HEK293 (cell line): ENCODE measurements at regions of chr10 and their contacts with region 1.

Region 1: DNA sequence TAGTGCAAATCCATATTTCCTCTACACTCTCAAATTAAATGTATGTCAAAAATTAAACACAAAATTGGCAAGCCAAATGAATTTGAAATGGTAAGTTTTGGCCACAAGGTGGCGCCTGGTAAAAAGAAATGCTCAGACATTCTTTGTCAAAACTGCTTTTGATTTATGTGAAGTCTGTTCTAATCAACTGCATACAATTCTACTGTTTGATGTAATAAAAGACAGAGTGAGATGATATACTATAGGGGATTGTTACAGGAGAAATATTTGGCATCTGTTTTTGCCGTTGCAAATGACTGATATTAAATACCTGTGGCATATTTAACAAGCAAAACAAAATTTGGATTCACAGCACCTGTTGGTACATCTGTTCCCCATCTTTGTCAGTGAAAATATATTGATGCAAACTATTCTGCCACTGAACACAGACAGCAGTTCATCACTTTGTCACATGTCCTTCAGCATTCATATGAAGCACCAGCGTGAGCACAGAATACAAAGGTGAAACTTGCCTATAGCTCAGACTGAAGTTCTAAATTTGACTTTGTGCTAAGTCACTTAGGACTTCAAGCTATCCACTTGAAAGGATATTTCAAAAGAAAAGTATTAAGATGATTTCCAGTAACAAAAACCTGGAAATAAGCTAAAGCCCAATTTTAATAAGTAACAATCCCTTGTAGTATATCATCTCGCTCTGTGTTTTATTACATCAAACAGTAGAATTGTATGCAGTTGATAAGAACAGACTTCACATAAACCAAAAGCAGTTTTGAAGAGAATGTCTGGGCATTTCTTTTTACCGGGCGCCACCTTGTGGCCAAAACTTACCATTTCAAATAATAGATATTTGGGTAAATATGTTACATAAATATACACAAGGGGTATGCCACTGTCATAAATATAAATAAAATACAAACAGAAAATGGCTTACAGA is 10.2 kb upstream of the CH25H start:
- H3K4me3 ChIP-seq: no peak overlapping the region
- H3K27ac ChIP-seq: no peak overlapping the region
- H3K4me1 ChIP-seq: 0 out of 2 replicates have a peak, but pooled peaks cover 2% of the 10 kb centered on the region
- CTCF ChIP-seq: peak; percentile 44; the same call in 1 of the 2 replicates

Region 2: DNA sequence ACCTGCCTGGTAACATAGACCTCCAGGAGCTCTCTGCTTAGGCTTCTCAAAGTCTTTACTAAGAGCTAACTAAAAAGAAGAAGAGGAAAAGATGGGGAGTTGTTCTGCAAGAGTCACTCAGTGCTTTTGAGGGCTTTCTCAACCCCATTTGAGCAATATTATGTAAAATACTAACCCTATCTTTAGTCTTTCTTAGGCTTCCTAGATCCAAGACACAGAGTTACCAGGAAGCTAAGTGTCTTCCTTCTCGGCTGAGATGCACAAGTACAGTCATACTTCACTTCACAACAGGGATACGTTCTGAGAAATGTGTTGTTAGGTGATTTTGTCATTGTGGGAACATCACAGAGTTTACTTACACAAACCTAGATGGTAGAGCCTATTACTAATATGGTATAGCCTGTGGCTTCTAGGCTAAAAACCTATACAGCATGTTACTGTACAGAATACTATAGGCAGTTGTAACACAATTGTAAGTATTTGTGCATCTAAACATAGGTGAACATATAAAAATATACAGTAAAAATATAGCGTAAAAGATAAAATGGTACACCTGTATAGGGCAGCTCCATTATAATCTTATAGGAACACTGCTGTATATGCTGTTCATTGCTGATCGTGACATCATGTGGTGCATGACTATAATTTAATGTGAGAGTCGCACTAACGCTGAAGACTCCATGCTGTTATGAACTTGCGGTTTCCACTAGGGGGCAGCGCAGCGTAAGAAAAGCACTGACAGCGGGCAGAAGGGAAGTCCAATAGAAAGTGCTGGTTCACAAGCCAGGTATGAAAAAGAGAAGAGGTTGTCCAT is 382.0 kb before region 1 on chr10:
- CTCF ChIA-PET with region 1: interaction called, 13 read pairs
- POLR2A ChIA-PET with region 1: no interaction called
- H3K4me3 ChIP-seq: no peak overlapping the region
- H3K27ac ChIP-seq: no peak overlapping the region
- H3K4me1 ChIP-seq: 0 out of 2 replicates have a peak, but pooled peaks cover 3% of the 10 kb centered on the region
- CTCF ChIP-seq: peak; percentile 72

Region 3: GRCh38 chr10:89022734-89023133 is 194.6 kb before region 1 on chr10:
- CTCF ChIA-PET with region 1: interaction called, 15 read pairs
- POLR2A ChIA-PET with region 1: no interaction called
- H3K4me3 ChIP-seq: no peak overlapping the region
- H3K27ac ChIP-seq: no peak overlapping the region
- H3K4me1 ChIP-seq: no peaks in the 10 kb centered on the region
- CTCF ChIP-seq: no peak

Region 4: GRCh38 chr10:89037096-89037495 is 180.2 kb before region 1 on chr10:
- CTCF ChIA-PET with region 1: interaction called, 82 read pairs
- POLR2A ChIA-PET with region 1: no interaction called
- H3K4me3 ChIP-seq: no peak overlapping the region
- H3K27ac ChIP-seq: no peak overlapping the region
- H3K4me1 ChIP-seq: 0 out of 2 replicates have a peak, but pooled peaks cover 8% of the 10 kb centered on the region
- CTCF ChIP-seq: no peak

Region 5: DNA sequence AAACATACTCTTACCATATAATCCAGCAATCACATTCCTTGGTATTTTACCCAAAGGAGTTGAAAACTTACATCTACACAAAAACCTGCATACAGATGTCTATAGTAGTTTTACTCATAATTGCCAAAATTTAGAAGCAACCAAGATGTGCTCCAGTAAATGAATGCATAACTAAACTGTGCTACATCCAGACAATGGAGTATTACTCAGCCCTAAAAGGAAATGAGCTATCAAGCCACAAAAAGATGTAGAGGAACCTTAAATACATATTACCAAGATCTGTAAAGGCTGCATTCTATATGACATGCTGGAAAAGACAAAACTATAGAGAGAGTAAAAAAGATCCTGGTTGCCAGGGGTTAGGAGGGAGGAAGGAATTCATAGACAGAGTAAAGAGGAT is 11.6 kb after region 1 on chr10:
- CTCF ChIA-PET with region 1: interaction called, 13 read pairs
- POLR2A ChIA-PET with region 1: no interaction called
- H3K4me3 ChIP-seq: no peak overlapping the region
- H3K27ac ChIP-seq: no peak overlapping the region
- H3K4me1 ChIP-seq: no peaks in the 10 kb centered on the region
- CTCF ChIP-seq: no peak